Caco-2 (cell line): ENCODE measurements at regions of chr10 and their contacts with region 1.

Region 1: GRCh38 chr10:78657163-78657861 is 411.5 kb upstream of the ZMIZ1 start:
- DNase-seq: peak; percentile 69 to 78
- H3K4me3 ChIP-seq: no peak overlapping the region
- H3K4me3 Mint-ChIP-seq: no peak overlapping the region
- H3K27ac Mint-ChIP-seq: no peak overlapping the region
- H3K4me1 ChIP-seq: no peaks in the 10 kb centered on the region
- H3K4me1 Mint-ChIP-seq: no peaks in the 10 kb centered on the region
- H3K27me3 ChIP-seq: no peaks in the 10 kb centered on the region
- H3K27me3 Mint-ChIP-seq: no peaks in the 10 kb centered on the region
- CTCF ChIP-seq: peak; percentile 70 to 79

Region 2: DNA sequence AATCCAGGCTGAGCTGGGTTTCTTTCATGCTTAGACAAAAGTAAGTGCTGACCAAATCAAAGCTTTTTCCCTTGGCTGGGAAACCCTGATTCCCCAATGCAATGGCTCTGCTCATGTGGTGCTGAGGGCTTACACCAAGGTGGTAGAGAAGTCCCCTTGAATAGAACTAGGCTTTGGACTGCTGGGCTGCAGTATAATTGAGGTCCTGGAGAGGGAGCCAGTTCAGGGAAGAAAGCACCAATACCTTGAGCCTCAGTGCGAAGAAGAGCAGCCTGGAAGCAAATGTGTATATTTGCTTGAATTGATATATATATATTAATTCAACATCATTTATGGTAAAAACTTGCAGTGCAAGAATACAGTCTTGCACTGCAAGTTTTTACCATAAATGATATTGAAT is 232.6 kb before region 1 on chr10:
- CTCF ChIA-PET with region 1: no interaction called
- POLR2A ChIA-PET with region 1: no interaction called
- intact Hi-C with region 1: loop called (anchors 1 kb)
- DNase-seq: peak in 1 of 2 experiments; percentile 53
- H3K4me3 ChIP-seq: no peak overlapping the region
- H3K4me3 Mint-ChIP-seq: no peak overlapping the region
- H3K27ac Mint-ChIP-seq: no peak overlapping the region
- H3K4me1 ChIP-seq: no peaks in the 10 kb centered on the region
- H3K4me1 Mint-ChIP-seq: no peaks in the 10 kb centered on the region
- H3K27me3 ChIP-seq: no peaks in the 10 kb centered on the region
- H3K27me3 Mint-ChIP-seq: no peaks in the 10 kb centered on the region
- CTCF ChIP-seq: peak; percentile 47 to 68

Region 3: DNA sequence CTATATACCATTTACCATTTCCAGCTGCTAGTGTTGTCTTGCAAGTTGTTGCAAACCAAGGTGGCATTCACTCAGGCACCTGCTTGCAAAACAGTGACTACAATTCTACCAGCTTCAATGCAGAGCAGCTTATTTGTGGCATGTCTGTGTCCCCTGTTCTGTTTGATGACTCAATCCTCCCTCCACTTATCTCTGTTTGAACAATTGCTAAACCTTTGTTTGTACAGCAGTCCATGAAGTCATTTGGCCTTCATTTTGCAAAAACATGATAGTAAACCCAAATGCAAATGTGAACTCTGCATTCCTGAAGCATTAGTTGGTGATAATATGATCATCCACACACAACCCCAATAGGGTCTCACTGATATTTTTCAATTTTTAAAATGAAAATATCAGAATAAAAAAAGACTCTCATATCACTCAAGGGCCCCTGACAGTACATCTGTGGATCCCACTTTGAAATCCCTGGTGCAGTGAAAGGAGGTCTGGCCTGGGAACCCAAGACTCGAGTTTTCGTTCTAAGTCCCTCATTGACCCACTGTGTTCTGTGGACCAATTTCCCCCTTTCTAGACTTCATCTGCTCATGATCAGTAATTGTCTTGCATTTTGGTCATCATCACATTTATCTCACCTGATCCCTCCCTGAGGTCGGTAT is 198.2 kb before region 1 on chr10:
- CTCF ChIA-PET with region 1: no interaction called
- POLR2A ChIA-PET with region 1: no interaction called
- intact Hi-C with region 1: loop called (anchors 10 kb)
- DNase-seq: peak; percentile 75 to 81
- H3K4me3 ChIP-seq: no peak overlapping the region
- H3K4me3 Mint-ChIP-seq: peak overlapping the region; percentile 37
- H3K27ac Mint-ChIP-seq: peak overlapping the region; percentile 61
- H3K4me1 ChIP-seq: peaks cover 43% of the 10 kb centered on the region
- H3K4me1 Mint-ChIP-seq: peaks cover 31% of the 10 kb centered on the region
- H3K27me3 ChIP-seq: no peaks in the 10 kb centered on the region
- H3K27me3 Mint-ChIP-seq: no peaks in the 10 kb centered on the region
- CTCF ChIP-seq: no peak